ENCODE measurements at regions of chr11 and their contacts with region 1.

Region 1: GRCh38 chr11:43311791-43312607 is at the start of gene API5:
- DNase-seq: peak; percentile 85 to 96
- ATAC-seq: peak; percentile 94 to 98 (median 94)
- H3K4me3 ChIP-seq: peak within 1 kb of the TSS; percentile 79
- H3K4me3 Mint-ChIP-seq: peak within 1 kb of the TSS; percentile 99
- H3K27ac ChIP-seq: peak within 1 kb of the TSS; percentile 81
- H3K27ac Mint-ChIP-seq: peak within 1 kb of the TSS; percentile 93 to 98
- H3K4me1 ChIP-seq: peaks cover 23% of the 10 kb centered on the region
- H3K4me1 Mint-ChIP-seq: peaks cover 42 to 44% of the 10 kb centered on the region in 2 donors
- H3K27me3 ChIP-seq: no peaks in the 10 kb centered on the region
- H3K27me3 Mint-ChIP-seq: no peaks in the 10 kb centered on the region
- CTCF ChIP-seq: peak; percentile 68
- total RNA-seq, gene API5: 61.9 to 80.4 (median 77.2) TPM

Region 2: GRCh38 chr11:43358801-43359421 is 46.9 kb after region 1 on chr11 and contains the start of gene TTC17:
- intact Hi-C with region 1: loop called (anchors 1 kb)
- DNase-seq: peak; percentile 87 to 94
- ATAC-seq: peak; percentile 95 to 98 (median 95)
- H3K4me3 ChIP-seq: peak within 1 kb of the TSS; percentile 87
- H3K4me3 Mint-ChIP-seq: peak within 1 kb of the TSS; percentile 99
- H3K27ac ChIP-seq: peak within 1 kb of the TSS; percentile 94
- H3K27ac Mint-ChIP-seq: peak within 1 kb of the TSS; percentile 96
- H3K4me1 ChIP-seq: peaks cover 14% of the 10 kb centered on the region
- H3K4me1 Mint-ChIP-seq: peaks cover 44% of the 10 kb centered on the region in 2 donors
- H3K27me3 ChIP-seq: no peaks in the 10 kb centered on the region
- H3K27me3 Mint-ChIP-seq: no peaks in the 10 kb centered on the region
- CTCF ChIP-seq: no peak
- total RNA-seq, gene TTC17: 100 to 129 (median 101) TPM

Region 3: GRCh38 chr11:43419460-43419859 is 107.5 kb after region 1 on chr11:
- intact Hi-C with region 1: loop called (anchors 2 kb)
- DNase-seq: peak in 1 of 2 donors; percentile 49
- ATAC-seq: peak in 2 of 3 donors; percentile 46 to 50
- H3K4me3 ChIP-seq: no peak overlapping the region
- H3K4me3 Mint-ChIP-seq: no peak overlapping the region
- H3K27ac ChIP-seq: no peak overlapping the region
- H3K27ac Mint-ChIP-seq: no peak overlapping the region
- H3K4me1 ChIP-seq: no peaks in the 10 kb centered on the region
- H3K4me1 Mint-ChIP-seq: no peaks in the 10 kb centered on the region
- H3K27me3 ChIP-seq: no peaks in the 10 kb centered on the region
- H3K27me3 Mint-ChIP-seq: no peaks in the 10 kb centered on the region
- CTCF ChIP-seq: peak; percentile 66

Region 4: GRCh38 chr11:43434893-43435292 is 122.9 kb after region 1 on chr11:
- intact Hi-C with region 1: no loop called
- DNase-seq: no peak
- ATAC-seq: no peak
- H3K4me3 ChIP-seq: no peak overlapping the region
- H3K4me3 Mint-ChIP-seq: no peak overlapping the region
- H3K27ac ChIP-seq: no peak overlapping the region
- H3K27ac Mint-ChIP-seq: no peak overlapping the region
- H3K4me1 ChIP-seq: no peaks in the 10 kb centered on the region
- H3K4me1 Mint-ChIP-seq: no peaks in the 10 kb centered on the region
- H3K27me3 ChIP-seq: no peaks in the 10 kb centered on the region
- H3K27me3 Mint-ChIP-seq: no peaks in the 10 kb centered on the region
- CTCF ChIP-seq: no peak

Region 5: DNA sequence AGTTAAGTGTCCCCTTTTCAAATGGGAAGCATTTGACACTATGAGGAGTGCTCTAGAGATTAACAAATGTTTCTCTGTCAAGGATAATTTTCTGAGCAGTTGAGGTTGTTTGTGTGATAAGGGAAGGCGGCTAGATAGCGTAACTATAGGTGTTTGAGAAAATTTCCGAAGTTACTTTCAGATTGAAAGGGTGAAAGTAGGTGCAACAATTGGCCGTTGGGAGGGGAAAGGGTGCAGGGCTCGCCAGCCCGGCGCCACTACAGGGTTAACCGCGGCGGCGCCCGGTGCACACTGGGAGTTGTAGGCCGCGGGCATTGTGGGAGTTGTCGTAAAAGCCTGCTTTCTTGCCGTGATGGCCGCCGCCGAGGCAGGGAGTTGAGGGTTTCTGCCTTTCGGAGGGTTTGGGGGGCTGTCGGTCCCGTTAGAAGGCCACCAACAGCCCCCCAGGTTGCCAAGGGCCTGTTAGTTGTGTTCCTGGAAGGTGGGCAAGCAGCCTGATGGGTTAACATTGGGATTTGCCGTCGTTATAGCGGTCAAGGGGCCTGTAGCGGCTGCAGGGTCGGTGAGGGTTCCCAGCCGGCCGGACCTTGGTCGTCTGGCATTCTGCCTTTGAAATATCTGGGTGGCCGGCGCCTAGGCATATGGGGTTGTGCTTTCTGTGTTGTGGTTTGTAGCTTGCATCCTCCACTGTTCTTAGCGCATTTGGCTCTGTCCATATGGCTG is 332.1 kb after region 1 on chr11:
- intact Hi-C with region 1: loop called (anchors 5 kb)
- DNase-seq: peak; percentile 85 to 90
- ATAC-seq: peak; percentile 99
- H3K4me3 ChIP-seq: peak overlapping the region; percentile 89
- H3K4me3 Mint-ChIP-seq: peak overlapping the region; percentile 79
- H3K27ac ChIP-seq: peak overlapping the region; percentile 61
- H3K27ac Mint-ChIP-seq: peak overlapping the region; percentile 69 to 90
- H3K4me1 ChIP-seq: peaks cover 8% of the 10 kb centered on the region
- H3K4me1 Mint-ChIP-seq: peaks cover 14 to 15% of the 10 kb centered on the region in 2 donors
- H3K27me3 ChIP-seq: peaks cover 4% of the 10 kb centered on the region
- H3K27me3 Mint-ChIP-seq: peaks cover 12 to 14% of the 10 kb centered on the region in 2 donors
- CTCF ChIP-seq: no peak

Region 6: DNA sequence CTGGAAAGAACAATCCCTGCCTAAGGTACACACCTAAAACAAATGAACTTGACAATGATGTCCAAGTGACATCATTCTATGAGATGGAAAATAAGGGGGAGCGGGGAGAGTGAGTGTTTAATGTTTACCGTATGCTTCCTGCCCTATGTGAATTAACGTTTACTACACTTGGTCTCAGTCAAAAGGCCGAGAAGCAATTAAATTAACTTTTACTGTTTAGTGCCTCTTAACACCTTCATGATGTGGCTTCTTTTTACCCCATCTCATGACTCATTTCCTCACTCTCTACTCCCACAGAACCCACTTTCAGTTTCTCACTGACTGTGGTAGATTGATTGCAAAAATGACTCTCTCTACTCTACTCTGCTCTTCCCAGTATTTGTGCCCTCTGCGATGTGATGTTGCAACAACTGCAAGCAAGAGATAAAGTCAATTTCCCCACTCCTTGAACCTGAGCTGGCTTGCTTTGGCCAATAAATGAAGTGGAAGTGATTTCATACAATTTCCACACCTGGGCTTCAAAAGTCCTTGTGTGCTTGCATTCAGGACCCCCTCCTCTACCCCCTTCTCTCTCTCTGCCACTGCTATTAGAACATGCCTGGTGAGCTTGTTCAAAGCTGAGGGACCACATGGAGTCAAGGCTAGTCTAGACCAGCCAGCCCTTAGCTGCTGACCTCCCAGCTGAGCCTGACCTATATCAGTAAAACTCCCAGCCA is 557.0 kb after region 1 on chr11:
- intact Hi-C with region 1: loop called (anchors 5 kb)
- DNase-seq: peak; percentile 25 to 77
- ATAC-seq: peak; percentile 89 to 98 (median 96)
- H3K4me3 ChIP-seq: no peak overlapping the region
- H3K4me3 Mint-ChIP-seq: peak overlapping the region; percentile 43
- H3K27ac ChIP-seq: peak overlapping the region; percentile 84
- H3K27ac Mint-ChIP-seq: peak overlapping the region; percentile 73 to 86
- H3K4me1 ChIP-seq: peaks cover 16% of the 10 kb centered on the region
- H3K4me1 Mint-ChIP-seq: peaks cover 28 to 29% of the 10 kb centered on the region in 2 donors
- H3K27me3 ChIP-seq: no peaks in the 10 kb centered on the region
- H3K27me3 Mint-ChIP-seq: peaks cover 9 to 14% of the 10 kb centered on the region in 2 donors
- CTCF ChIP-seq: no peak